PC-9 (cell line): ENCODE measurements at regions of chr20 and their contacts with region 1.

Region 1: GRCh38 chr20:44747166-44748004 is 1.7 kb downstream of the KCNK15 start:
- DNase-seq: peak; percentile 93 to 94
- H3K4me3 ChIP-seq: peak overlapping the region; percentile 11; the same call in 1 of the 2 replicates
- H3K27ac ChIP-seq: peak overlapping the region; percentile 89
- H3K4me1 ChIP-seq: peaks cover 22% of the 10 kb centered on the region
- H3K27me3 ChIP-seq: peaks cover 42% of the 10 kb centered on the region
- CTCF ChIP-seq: peak; percentile 95

Region 2: DNA sequence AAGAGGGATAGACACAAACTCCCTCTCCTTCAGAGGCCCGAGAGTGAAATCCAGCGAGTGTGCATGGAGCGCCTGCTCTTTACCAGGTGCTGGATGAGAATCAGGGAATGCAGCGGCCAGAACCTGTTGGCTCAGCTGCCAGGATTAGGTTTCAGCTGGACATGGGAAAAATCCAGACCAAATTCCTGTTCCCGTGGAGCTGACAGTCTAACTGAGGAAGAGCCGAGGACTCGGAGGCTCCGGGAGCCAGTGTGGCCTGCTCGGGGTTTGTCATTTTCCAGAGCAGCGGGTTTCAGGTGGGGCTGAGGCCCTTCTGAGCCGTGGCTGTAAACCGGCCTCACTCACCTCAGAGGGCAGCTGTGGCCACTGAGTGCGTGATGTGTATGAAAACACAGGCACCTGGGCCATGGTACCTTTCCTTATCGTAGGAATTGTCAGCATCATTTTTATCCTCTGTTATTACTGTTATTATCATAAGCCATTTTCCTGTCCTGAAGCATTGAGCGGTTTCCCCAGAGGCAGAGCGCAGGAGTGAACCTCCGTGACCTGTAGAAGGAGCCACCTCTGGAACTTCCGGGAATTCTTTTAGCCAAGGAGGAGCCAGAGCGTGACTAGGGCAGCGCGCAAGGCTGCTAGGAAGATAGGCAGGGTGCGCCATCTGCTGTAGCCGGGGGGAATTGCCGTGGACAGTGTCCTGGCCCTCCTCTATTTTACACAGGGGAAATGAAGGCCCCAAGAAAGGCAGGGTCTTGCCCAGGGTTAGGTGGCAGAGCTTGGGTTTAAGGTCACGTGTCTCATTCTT is 137.7 kb before region 1 on chr20:
- CTCF ChIA-PET with region 1: interaction called, 8 read pairs
- POLR2A ChIA-PET with region 1: no interaction called
- intact Hi-C with region 1: loop called (anchors 5 kb)
- DNase-seq: peak; percentile 85 to 91
- H3K4me3 ChIP-seq: no peak overlapping the region
- H3K27ac ChIP-seq: 0 out of 2 replicates have a peak overlapping the region, but pooled peaks have one; percentile 0
- H3K4me1 ChIP-seq: peaks cover 7% of the 10 kb centered on the region
- H3K27me3 ChIP-seq: no peaks in the 10 kb centered on the region
- CTCF ChIP-seq: peak; percentile 99

Region 3: GRCh38 chr20:44692932-44693476 is 54.4 kb before region 1 on chr20:
- CTCF ChIA-PET with region 1: interaction called, 3 read pairs
- POLR2A ChIA-PET with region 1: no interaction called
- intact Hi-C with region 1: loop called (anchors 1 kb)
- DNase-seq: peak; percentile 93 to 97
- H3K4me3 ChIP-seq: no peak overlapping the region
- H3K27ac ChIP-seq: peak overlapping the region; percentile 65
- H3K4me1 ChIP-seq: peaks cover 20% of the 10 kb centered on the region
- H3K27me3 ChIP-seq: no peaks in the 10 kb centered on the region
- CTCF ChIP-seq: no peak

Region 4: DNA sequence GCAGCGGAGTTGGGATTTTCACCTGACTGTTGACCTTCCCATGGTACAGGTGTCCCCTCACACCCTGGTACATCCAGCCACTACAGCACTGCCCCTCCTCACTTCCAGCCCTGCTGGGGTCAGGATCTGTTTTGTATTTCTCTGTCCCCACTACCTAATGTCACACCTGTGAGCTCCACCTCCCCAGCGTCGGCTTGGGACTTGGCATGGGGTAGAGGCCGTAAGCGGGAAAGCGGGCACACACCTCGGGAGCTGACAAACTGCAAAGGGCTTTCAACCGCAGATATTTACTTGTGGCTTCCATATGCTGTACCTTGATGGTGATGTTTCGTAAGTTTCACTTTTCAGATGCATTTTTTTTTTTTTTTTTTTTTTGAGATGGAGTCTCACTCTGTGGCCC is 37.6 kb before region 1 on chr20:
- CTCF ChIA-PET with region 1: interaction called, 11 read pairs
- POLR2A ChIA-PET with region 1: no interaction called
- intact Hi-C with region 1: no loop called
- DNase-seq: no peak
- H3K4me3 ChIP-seq: no peak overlapping the region
- H3K27ac ChIP-seq: no peak overlapping the region
- H3K4me1 ChIP-seq: peaks cover 10% of the 10 kb centered on the region
- H3K27me3 ChIP-seq: no peaks in the 10 kb centered on the region
- CTCF ChIP-seq: no peak

Region 5: DNA sequence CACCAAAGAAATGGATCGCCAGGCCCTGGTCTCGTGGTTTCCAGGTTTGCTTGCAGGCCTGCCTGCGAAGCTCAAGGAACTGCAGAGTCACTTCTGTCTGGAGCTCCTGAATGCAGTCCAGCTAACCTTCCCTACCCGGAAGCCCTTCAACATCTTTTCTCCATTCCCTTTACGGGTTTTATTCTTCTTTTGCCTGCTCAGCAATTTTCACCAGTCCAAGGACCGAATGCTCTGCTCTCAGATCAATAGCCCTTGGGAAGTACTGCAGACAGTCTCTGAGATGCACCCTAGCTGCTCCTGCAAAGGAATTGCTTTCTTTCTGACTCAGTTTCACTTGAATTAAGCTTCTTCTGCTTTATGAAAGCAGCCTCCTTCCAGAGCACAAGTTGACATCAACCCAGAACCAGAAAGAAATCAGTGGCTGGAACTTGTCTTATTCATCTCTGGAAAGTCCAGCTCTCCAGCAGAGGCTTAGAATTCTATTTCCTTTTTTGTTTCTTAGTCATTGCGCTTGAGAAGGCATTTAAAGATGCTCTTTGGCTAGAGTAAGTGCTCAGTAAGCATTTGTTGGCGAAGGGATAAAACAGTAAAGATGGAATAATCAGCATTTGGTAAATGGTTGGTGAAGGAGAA is 119.4 kb after region 1 on chr20:
- CTCF ChIA-PET with region 1: interaction called, 9 read pairs
- POLR2A ChIA-PET with region 1: no interaction called
- intact Hi-C with region 1: loop called (anchors 1 kb)
- DNase-seq: no peak
- H3K4me3 ChIP-seq: no peak overlapping the region
- H3K27ac ChIP-seq: no peak overlapping the region
- H3K4me1 ChIP-seq: no peaks in the 10 kb centered on the region
- H3K27me3 ChIP-seq: 0 out of 2 replicates have a peak, but pooled peaks cover 17% of the 10 kb centered on the region
- CTCF ChIP-seq: no peak

Region 6: DNA sequence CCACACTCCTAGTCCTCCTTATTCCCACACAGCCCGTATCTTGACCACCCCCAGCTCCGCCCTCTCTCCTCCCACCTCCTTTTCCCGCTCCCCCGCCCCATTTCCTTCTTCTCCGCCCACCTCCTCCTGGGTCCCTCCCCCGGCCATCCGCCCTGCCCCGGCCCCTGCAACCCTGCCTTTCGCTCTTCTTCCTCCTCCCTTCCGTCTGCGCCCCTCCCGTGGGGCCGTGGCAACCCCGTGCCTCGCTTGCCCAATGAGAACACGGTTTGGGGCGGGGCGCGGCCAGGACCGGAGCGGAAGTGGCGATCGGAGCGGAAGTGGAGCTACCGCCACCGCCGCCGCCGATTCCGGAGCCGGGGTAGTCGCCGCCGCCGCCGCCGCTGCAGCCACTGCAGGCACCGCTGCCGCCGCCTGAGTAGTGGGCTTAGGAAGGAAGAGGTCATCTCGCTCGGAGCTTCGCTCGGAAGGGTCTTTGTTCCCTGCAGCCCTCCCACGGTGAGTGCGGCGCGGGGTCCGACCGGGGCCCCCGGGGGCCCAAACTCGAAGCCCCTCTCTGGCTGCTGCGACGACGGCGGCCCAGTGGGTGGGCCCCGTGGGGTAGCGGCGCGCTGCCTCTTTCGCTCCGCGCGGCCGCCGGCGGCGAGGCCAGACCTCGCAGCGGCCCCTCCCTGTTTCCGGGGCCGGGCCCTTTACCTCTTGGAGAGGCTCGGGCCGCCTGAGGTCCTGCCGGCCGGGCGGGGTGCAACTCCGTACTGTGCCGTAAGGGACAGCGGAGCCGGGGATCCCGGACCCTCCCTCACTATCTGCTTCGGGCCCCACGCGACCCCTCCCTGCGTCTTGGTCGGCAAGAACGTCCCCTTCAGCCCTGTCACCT is 138.2 kb after region 1 on chr20 and contains the start of gene YWHAB:
- CTCF ChIA-PET with region 1: interaction called, 3 read pairs
- POLR2A ChIA-PET with region 1: no interaction called
- intact Hi-C with region 1: loop called (anchors 1 kb)
- DNase-seq: peak; percentile 94 to 99
- H3K4me3 ChIP-seq: peak within 1 kb of the TSS; percentile 94
- H3K27ac ChIP-seq: peak within 1 kb of the TSS; percentile 81
- H3K4me1 ChIP-seq: peaks cover 42% of the 10 kb centered on the region
- H3K27me3 ChIP-seq: no peaks in the 10 kb centered on the region
- CTCF ChIP-seq: peak; percentile 40; the same call in 1 of the 2 replicates
- total RNA-seq, gene YWHAB: 194 and 249 TPM in 2 replicates

Region 7: GRCh38 chr20:44909872-44910689 is 162.7 kb after region 1 on chr20 and contains the start of gene PABPC1L:
- CTCF ChIA-PET with region 1: no interaction called
- POLR2A ChIA-PET with region 1: no interaction called
- intact Hi-C with region 1: loop called (anchors 1 kb)
- DNase-seq: peak; percentile 76 to 89
- H3K4me3 ChIP-seq: peak within 1 kb of the TSS; percentile 69
- H3K27ac ChIP-seq: 0 out of 2 replicates have a peak within 1 kb of the TSS, but pooled peaks have one; percentile 24
- H3K4me1 ChIP-seq: peaks cover 4% of the 10 kb centered on the region; the same call in 1 of the 2 replicates
- H3K27me3 ChIP-seq: no peaks in the 10 kb centered on the region
- CTCF ChIP-seq: no peak
- total RNA-seq, gene PABPC1L: 132 and 156 TPM in 2 replicates